BJ (cell line): ENCODE measurements at regions of chr6 and their contacts with region 1.

Region 1: DNA sequence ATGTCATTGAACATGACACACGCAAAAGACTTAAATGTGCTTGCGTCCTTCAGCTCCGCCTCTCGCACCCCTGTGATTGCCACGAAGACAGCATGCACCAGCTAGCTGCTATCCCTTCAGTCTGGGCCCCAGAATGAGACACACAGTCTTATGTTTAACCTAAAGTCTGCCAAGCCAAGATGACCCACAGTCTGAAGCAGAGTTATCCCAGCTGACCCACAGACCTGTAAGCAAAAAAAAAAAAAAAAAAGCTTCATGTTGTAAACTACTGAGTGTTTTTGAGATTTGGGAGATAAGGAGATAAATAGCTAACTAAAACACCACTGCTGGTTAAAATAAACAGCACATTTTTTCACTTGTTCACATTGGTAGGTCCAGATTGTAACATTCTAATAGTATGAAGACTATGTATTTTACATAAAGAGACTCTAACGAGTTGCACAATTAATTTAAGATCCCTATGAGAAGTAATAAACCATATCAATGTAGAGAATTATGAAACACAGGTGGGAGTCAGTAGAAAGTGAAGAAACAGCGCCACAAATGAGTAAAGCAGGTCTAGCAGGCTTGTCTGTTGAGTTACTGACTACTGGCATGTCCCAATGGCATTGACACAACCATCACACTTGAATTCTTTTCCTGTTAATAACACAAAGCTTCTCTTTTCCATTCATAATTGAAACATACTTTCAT is 47.4 kb upstream of the CCDC28A start:
- DNase-seq: no peak
- H3K4me3 ChIP-seq: no peak overlapping the region
- H3K27me3 ChIP-seq: no peaks in the 10 kb centered on the region
- CTCF ChIP-seq: no peak

Region 2: GRCh38 chr6:138546733-138547185 is 179.5 kb before region 1 on chr6:
- CTCF ChIA-PET with region 1: no interaction called
- POLR2A ChIA-PET with region 1: interaction called, 28 read pairs
- DNase-seq: no peak
- H3K4me3 ChIP-seq: no peak overlapping the region
- H3K27me3 ChIP-seq: no peaks in the 10 kb centered on the region
- CTCF ChIP-seq: no peak